ENCODE measurements at regions of chr11 and their contacts with region 1.

Region 1: DNA sequence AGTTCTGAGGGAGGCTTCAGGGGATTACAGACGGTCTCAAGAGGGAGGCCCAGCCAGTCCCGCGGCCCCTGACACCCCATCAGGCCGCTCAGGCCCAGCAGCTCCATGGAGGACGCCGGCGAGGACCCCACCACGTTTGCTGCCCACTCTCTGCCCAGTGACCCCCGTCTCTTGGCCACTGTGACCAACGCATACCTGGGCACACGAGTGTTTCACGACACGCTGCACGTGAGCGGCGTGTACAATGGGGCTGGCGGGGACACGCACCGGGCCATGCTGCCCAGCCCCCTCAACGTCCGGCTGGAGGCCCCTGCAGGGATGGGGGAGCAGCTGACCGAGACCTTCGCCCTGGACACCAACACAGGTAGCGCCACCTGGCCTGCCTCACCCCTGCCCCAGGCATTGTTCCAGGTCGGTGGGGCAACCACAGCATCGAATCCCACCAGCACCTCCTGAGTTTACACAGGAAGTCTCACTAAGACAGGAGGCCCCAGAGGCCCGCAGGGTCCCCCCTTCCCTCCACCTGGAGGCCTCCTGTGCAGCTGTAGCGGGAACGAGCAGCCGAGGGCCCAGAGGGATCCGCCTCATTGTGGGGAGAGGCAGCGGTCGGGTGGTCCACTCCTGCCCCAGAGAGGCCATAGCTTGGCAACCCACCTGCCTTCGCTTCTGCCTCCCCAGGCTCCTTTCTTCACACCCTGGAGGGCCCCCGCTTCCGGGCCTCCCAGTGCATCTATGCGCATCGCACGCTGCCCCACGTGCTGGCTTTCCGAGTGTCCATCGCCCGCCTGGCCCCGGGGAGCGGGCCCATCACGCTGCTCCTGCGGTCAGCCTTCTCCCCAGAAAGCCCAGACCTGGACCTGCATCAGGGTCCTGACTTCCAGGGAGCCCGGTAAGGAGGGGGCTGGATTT is 1.0 kb downstream of the PGGHG start:
- DNase-seq: peak in 4 of 5 donors; percentile 27 to 44 (median 32)
- H3K4me3 ChIP-seq: peak overlapping the region; percentile 43
- H3K27ac ChIP-seq: no peak overlapping the region
- H3K4me1 ChIP-seq: no peaks in the 10 kb centered on the region
- H3K27me3 ChIP-seq: no peaks in the 10 kb centered on the region
- CTCF ChIP-seq: no peak
- EP300 ChIP-seq: no peak
- POLR2A ChIP-seq: no peak

Region 2: GRCh38 chr11:369336-370018 is 79.5 kb after region 1 on chr11 and contains the start of gene B4GALNT4:
- intact Hi-C with region 1: loop called in 1 of 4 experiments (anchors 5 kb)
- DNase-seq: peak; percentile 57 to 74 (median 72)
- H3K4me3 ChIP-seq: peak within 1 kb of the TSS; percentile 36
- H3K27ac ChIP-seq: peak within 1 kb of the TSS; percentile 52 to 73
- H3K4me1 ChIP-seq: peaks cover 5% of the 10 kb centered on the region
- H3K27me3 ChIP-seq: no peaks in the 10 kb centered on the region
- CTCF ChIP-seq: no peak
- EP300 ChIP-seq: no peak
- POLR2A ChIP-seq: no peak
- total RNA-seq, gene B4GALNT4: 14.7 to 90.3 (median 52.5) TPM

Region 3: GRCh38 chr11:379205-380094 is 89.5 kb after region 1 on chr11:
- intact Hi-C with region 1: loop called in 1 of 4 experiments (anchors 5 kb)
- DNase-seq: peak in 1 of 5 donors; percentile 36
- H3K4me3 ChIP-seq: no peak overlapping the region
- H3K27ac ChIP-seq: no peak overlapping the region
- H3K4me1 ChIP-seq: no peaks in the 10 kb centered on the region
- H3K27me3 ChIP-seq: no peaks in the 10 kb centered on the region
- CTCF ChIP-seq: no peak
- EP300 ChIP-seq: no peak
- POLR2A ChIP-seq: no peak

Region 4: DNA sequence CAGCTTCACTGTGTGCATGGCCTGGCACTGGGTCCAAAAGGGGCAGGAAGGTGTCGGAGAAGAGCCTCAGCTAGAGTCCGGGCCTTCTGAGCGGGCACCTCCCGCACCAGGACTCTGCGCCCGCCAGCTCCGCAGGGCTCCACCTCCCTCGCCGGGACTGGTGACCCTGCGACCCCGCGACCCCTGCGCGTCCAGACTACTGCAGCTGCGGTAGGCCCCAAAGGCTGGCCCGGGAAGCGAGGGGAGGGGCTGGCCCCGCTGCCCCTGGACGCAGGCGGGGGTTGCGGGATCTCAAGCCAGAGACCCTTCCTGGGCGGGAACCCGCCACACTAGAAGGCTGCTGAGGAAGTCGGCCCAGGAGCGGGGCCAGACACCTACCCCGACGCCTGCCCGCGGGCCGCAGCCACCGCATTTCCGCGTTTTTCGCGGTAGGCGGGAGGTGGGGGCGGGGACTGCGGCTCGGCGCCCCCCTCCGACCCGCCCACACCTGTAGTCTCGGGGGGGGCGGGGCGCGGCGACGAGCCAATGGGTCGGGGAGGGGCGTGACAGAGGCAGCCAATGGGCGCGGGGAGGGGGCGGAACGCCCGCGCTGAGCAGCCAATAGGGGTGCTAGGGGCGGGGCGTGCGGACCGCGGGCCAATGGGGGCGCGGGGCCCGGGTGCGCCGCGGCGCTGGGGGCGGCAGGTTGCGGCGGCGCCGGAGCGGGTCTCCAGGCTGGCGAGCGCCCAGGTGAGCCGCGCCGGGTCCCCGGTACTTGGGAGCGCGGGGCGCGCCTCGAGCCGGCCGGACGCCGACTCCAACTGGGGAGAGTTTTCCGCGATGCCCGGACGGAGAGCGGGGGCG is 270.6 kb after region 1 on chr11 and contains the starts of genes LMNTD2 and RASSF7:
- intact Hi-C with region 1: no loop called
- DNase-seq: peak; percentile 89 to 93 (median 92)
- H3K4me3 ChIP-seq: peak within 1 kb of the TSS; percentile 56
- H3K27ac ChIP-seq: no peak within 1 kb of the TSS
- H3K4me1 ChIP-seq: peaks cover 7% of the 10 kb centered on the region
- H3K27me3 ChIP-seq: no peaks in the 10 kb centered on the region
- CTCF ChIP-seq: no peak
- EP300 ChIP-seq: no peak
- POLR2A ChIP-seq: no peak
- total RNA-seq, gene LMNTD2: 0.70 to 7.6 (median 1.2) TPM
- total RNA-seq, gene RASSF7: 4.7 to 163 (median 9.5) TPM

Region 5: DNA sequence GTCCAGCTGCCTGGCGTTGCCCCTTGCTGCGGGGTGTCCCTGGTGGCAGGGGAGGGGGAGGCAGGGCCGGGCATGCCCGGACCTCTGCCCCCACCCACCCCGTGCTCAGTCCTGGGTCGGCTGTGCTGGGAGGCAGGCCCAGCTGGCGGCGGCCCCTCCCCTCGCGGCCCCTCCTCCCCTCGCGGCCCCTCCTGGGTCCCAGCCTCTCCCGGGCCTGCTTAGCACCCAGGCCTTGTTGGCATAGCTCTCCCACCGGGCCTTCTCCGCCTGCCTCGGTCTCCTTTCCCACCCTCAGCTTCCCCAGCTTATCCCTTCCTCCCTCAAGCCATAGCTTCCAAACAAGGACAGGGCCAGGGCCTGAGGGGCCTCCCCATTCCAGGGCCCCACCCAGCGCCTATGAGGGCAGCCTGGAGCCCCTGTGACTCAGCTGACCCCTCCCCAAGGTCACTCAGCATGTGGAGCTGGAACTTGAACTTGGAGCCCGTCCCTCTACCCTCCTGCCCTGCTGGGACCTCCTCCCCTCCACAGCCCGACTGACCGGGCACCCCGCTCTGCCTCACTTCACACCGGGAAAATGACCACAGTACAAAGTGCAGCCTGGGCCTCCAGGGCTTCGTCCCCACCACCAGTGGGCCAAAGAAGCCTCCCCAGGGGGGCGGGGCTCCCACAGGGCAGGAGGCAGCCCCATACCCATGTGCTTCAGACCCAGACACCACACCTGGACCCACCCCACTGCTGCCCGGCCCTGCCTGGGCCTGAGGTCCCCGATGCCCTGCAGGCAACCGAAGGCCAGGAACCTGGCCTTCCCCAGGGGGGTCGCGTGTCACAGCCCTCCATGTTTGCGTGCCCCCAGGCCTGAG is 417.2 kb after region 1 on chr11:
- intact Hi-C with region 1: no loop called
- DNase-seq: peak; percentile 50 to 65 (median 61)
- H3K4me3 ChIP-seq: peak overlapping the region; percentile 70
- H3K27ac ChIP-seq: peak overlapping the region; percentile 31 to 61
- H3K4me1 ChIP-seq: peaks cover 34% of the 10 kb centered on the region
- H3K27me3 ChIP-seq: no peaks in the 10 kb centered on the region
- CTCF ChIP-seq: no peak
- EP300 ChIP-seq: no peak
- POLR2A ChIP-seq: no peak